ENCODE measurements at regions of chr11 and their contacts with region 1.

Region 1: DNA sequence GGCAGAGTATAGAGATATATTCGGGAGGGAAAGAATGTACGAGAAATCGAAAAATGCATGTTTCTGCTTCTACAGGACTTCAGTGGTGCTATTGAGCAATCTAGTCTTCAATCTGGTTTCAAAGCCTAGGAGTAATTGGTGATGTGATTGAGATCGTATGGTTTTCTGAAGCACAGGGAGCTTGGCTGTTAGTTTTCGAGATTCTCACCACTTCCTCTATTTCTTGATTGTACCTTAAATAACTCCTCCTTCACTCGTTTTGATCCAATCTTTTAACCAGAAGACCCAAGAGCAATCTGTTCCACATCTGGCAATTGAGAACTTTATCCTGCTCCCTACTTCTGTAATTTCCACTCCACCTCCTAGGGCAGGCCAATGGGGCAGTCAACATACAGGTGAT is 518 bp downstream of the CCDC179 start:
- DNase-seq: no peak
- H3K4me3 ChIP-seq: no peak overlapping the region
- H3K27ac ChIP-seq: no peak overlapping the region
- H3K4me1 ChIP-seq: no peaks in the 10 kb centered on the region
- H3K27me3 ChIP-seq: no peaks in the 10 kb centered on the region
- CTCF ChIP-seq: no peak
- EP300 ChIP-seq: no peak
- POLR2A ChIP-seq: no peak

Region 2: GRCh38 chr11:22890227-22890626 is 30.5 kb after region 1 on chr11:
- in situ Hi-C with region 1: no loop called
- intact Hi-C with region 1: loop called (anchors 5 kb)
- DNase-seq: no peak
- H3K4me3 ChIP-seq: no peak overlapping the region
- H3K27ac ChIP-seq: no peak overlapping the region
- H3K4me1 ChIP-seq: no peaks in the 10 kb centered on the region
- H3K27me3 ChIP-seq: no peaks in the 10 kb centered on the region
- CTCF ChIP-seq: no peak
- EP300 ChIP-seq: no peak
- POLR2A ChIP-seq: no peak

Measured in transverse colon (tissue), 4 donors.